ENCODE measurements at regions of chr3 and their contacts with region 1.

Region 1: DNA sequence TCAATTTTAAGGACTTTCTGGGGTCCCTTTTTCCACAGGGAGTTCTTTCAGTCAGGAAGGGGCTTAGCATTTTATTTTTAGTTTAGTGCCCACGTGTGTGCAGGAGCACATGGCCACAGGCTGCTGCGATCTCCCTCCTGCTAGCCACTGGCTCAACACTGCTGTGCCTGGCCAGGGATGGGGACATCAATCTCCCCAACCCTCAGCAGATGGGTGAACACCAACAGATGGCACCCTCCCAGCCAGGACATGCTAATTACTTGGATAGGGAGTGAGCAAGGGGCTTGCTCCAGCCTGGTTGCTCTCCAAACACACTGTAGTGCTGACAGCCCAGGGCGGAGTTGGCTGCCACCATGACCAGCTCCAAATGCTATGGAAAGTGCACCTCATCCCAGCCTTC is 7.4 kb upstream of the RIOX2 start:
- DNase-seq: no peak
- H3K4me3 ChIP-seq: no peak overlapping the region
- H3K27ac ChIP-seq: no peak overlapping the region
- H3K4me1 ChIP-seq: peaks cover 0 to 29% (median 0%) of the 10 kb centered on the region in 3 donors
- H3K27me3 ChIP-seq: no peaks in the 10 kb centered on the region
- CTCF ChIP-seq: no peak
- POLR2A ChIP-seq: no peak

Region 2: DNA sequence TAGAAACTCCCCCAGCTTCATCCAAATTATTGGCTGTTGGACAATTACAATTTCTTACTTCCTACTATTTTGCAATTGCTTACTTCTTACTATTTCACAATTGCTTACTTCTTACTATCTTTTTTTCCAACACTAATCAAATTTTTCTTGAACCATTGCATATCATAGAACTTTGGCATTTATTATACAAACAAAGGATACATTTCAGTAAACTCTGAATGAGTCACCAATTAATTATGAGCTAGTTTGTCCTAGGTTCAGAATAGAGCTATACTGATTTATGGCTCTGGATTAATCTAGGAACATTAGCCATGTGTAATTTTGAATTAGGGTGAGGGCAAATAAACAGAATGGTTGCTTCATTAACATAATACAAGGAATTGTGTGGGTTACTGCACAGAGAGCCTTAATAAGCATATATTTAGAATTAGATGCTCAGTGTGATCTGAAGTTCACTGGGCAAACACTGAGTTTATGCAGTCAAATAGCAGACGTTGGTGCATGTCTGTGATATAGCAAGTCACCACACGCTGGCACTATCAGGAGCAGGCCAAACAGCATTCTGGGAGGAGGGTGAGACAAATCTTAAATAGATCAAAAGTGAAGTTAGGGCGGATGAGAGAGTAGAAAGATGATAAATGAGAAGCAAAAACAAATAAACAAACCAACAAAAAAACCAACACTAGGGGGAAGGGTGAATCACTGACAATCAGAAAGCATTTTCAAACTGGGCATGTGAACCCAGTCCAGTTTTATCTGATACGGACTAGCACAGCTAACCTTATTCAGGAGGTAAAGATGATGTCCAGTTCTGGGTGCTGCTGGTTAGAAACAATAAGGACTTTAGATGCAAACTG is 34.0 kb after region 1 on chr3:
- intact Hi-C with region 1: loop called (anchors 5 kb)
- DNase-seq: no peak
- H3K4me3 ChIP-seq: no peak overlapping the region
- H3K27ac ChIP-seq: peak overlapping the region; percentile 64 to 81 (median 72)
- H3K4me1 ChIP-seq: peaks cover 16 to 46% (median 19%) of the 10 kb centered on the region in 3 donors
- H3K27me3 ChIP-seq: no peaks in the 10 kb centered on the region
- CTCF ChIP-seq: peak in 1 of 6 experiments; percentile 20
- POLR2A ChIP-seq: no peak

Region 3: GRCh38 chr3:98027085-98027446 is 47.5 kb after region 1 on chr3:
- intact Hi-C with region 1: no loop called
- DNase-seq: no peak
- H3K4me3 ChIP-seq: no peak overlapping the region
- H3K27ac ChIP-seq: no peak overlapping the region
- H3K4me1 ChIP-seq: peaks cover 0 to 16% (median 0%) of the 10 kb centered on the region in 3 donors
- H3K27me3 ChIP-seq: peaks cover 0 to 3% (median 0%) of the 10 kb centered on the region in 4 donors
- CTCF ChIP-seq: no peak
- POLR2A ChIP-seq: no peak

Region 4: GRCh38 chr3:98115717-98116116 is 136.1 kb after region 1 on chr3:
- intact Hi-C with region 1: no loop called
- DNase-seq: no peak
- H3K4me3 ChIP-seq: no peak overlapping the region
- H3K27ac ChIP-seq: no peak overlapping the region
- H3K4me1 ChIP-seq: no peaks in the 10 kb centered on the region
- H3K27me3 ChIP-seq: no peaks in the 10 kb centered on the region
- CTCF ChIP-seq: no peak
- POLR2A ChIP-seq: no peak

Measured in esophagus squamous epithelium (tissue), 5 donors.